Posterior cingulate gyrus (tissue), 11 donors: ENCODE measurements at regions of chr10 and their contacts with region 1.

Region 1: GRCh38 chr10:104291439-104291951 is 22.5 kb downstream of the GSTO2 start:
- DNase-seq: peak; percentile 79 to 99 (median 90)

Region 2: GRCh38 chr10:104337974-104338735 is 46.7 kb after region 1 on chr10 and contains the start of gene ITPRIP:
- intact Hi-C with region 1: loop called (anchors 2 kb)
- DNase-seq: peak in 7 of 10 donors; percentile 47 to 90 (median 64)